ENCODE measurements at regions of chr9 and their contacts with region 1.

Region 1: DNA sequence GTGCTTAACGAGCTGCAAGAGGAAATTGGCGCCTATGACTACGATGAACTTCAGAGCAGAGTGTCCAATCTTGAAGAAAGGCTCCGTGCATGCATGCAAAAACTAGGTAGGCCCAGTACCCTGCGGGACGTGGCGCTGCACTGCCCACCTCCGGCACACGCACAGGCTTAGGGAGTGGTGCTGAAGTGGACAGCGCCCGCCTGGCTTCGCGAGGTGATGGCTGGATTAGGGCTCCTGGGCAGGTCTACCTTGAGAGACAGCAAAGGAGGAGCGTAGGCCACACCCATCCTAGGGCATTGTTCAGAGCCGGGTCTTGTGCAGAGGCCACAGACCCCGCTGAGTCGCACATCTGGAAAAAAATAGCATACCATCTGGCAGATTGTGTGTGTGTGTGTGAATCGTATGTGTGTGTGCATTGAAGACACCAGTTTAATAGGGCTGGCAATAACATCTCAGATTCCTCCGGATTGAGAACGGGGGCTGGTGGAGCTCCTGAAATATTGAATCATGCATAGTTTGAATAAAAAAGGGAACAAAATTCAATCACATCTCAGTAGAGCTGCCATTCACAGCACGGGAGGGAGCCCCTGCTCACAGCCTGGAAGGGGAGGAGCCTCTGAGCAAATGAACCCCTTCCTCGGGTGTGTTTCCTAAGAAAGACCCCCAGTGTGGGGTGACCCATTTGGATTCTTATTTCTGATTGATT is 11.1 kb downstream of the OLFM1 start:
- DNase-seq: no peak
- H3K4me3 ChIP-seq: no peak overlapping the region
- H3K27ac ChIP-seq: no peak overlapping the region
- H3K4me1 ChIP-seq: peaks cover 11% of the 10 kb centered on the region
- H3K27me3 ChIP-seq: peaks cover 43% of the 10 kb centered on the region
- CTCF ChIP-seq: no peak

Region 2: GRCh38 chr9:134778841-134779411 is 319.6 kb before region 1 on chr9:
- intact Hi-C with region 1: no loop called
- DNase-seq: peak; percentile 61
- H3K4me3 ChIP-seq: no peak overlapping the region
- H3K27ac ChIP-seq: no peak overlapping the region
- H3K4me1 ChIP-seq: peaks cover 37% of the 10 kb centered on the region
- H3K27me3 ChIP-seq: no peaks in the 10 kb centered on the region
- CTCF ChIP-seq: peak; percentile 80

Region 3: GRCh38 chr9:135032868-135033460 is 65.6 kb before region 1 on chr9:
- intact Hi-C with region 1: no loop called
- DNase-seq: no peak
- H3K4me3 ChIP-seq: no peak overlapping the region
- H3K27ac ChIP-seq: no peak overlapping the region
- H3K4me1 ChIP-seq: no peaks in the 10 kb centered on the region
- H3K27me3 ChIP-seq: peaks cover 72% of the 10 kb centered on the region
- CTCF ChIP-seq: no peak

Region 4: GRCh38 chr9:135343837-135344522 is 245.4 kb after region 1 on chr9:
- intact Hi-C with region 1: loop called (anchors 10 kb)
- DNase-seq: peak; percentile 55
- H3K4me3 ChIP-seq: no peak overlapping the region
- H3K27ac ChIP-seq: no peak overlapping the region
- H3K4me1 ChIP-seq: no peaks in the 10 kb centered on the region
- H3K27me3 ChIP-seq: peaks cover 100% of the 10 kb centered on the region
- CTCF ChIP-seq: peak; percentile 94